ENCODE measurements at regions of chr1 and their contacts with region 1.

Region 1: GRCh38 chr1:209335178-209335577 is 248.3 kb upstream of the CAMK1G start:
- DNase-seq: peak; percentile 59
- H3K4me3 ChIP-seq: no peak overlapping the region
- H3K27ac ChIP-seq: no peak overlapping the region
- H3K4me1 ChIP-seq: no peaks in the 10 kb centered on the region; a peak in 2 of 4 replicates
- H3K27me3 ChIP-seq: no peaks in the 10 kb centered on the region
- CTCF ChIP-seq: peak; percentile 82
- EP300 ChIP-seq: no peak
- RAD21 ChIP-seq: peak; percentile 50

Region 2: GRCh38 chr1:209318181-209319056 is 16.8 kb before region 1 on chr1:
- CTCF ChIA-PET with region 1: interaction called, 24 read pairs
- POLR2A ChIA-PET with region 1: no interaction called
- DNase-seq: no peak
- H3K4me3 ChIP-seq: no peak overlapping the region
- H3K27ac ChIP-seq: peak overlapping the region in 1 of 2 experiments; percentile 25; a peak in 1 of 4 replicates
- H3K4me1 ChIP-seq: 0 out of 4 replicates have a peak, but pooled peaks cover 0 to 5% of the 10 kb centered on the region in 2 experiments
- H3K27me3 ChIP-seq: no peaks in the 10 kb centered on the region
- CTCF ChIP-seq: no peak
- EP300 ChIP-seq: no peak
- RAD21 ChIP-seq: no peak

Region 3: GRCh38 chr1:209323743-209324142 is 11.4 kb before region 1 on chr1:
- CTCF ChIA-PET with region 1: interaction called, 24 read pairs
- POLR2A ChIA-PET with region 1: no interaction called
- DNase-seq: no peak
- H3K4me3 ChIP-seq: no peak overlapping the region
- H3K27ac ChIP-seq: no peak overlapping the region
- H3K4me1 ChIP-seq: peaks cover 5 to 9% of the 10 kb centered on the region in 2 experiments; a peak in 2 of 4 replicates
- H3K27me3 ChIP-seq: no peaks in the 10 kb centered on the region
- CTCF ChIP-seq: no peak
- EP300 ChIP-seq: no peak
- RAD21 ChIP-seq: no peak